ENCODE measurements at regions of chr11 and their contacts with region 1.

Region 1: GRCh38 chr11:8566613-8567210 is 27.3 kb downstream of the STK33 start:
- DNase-seq: peak; percentile 84
- ATAC-seq: peak; percentile 85
- H3K4me3 ChIP-seq: no peak overlapping the region
- H3K27ac ChIP-seq: no peak overlapping the region
- H3K4me1 ChIP-seq: no peaks in the 10 kb centered on the region
- H3K27me3 ChIP-seq: peaks cover 44% of the 10 kb centered on the region
- CTCF ChIP-seq: peak; percentile 69

Region 2: GRCh38 chr11:8192016-8192895 is 374.5 kb before region 1 on chr11:
- CTCF ChIA-PET with region 1: interaction called, 5 read pairs
- POLR2A ChIA-PET with region 1: no interaction called
- intact Hi-C with region 1: loop called (anchors 1 kb)
- DNase-seq: peak; percentile 69
- ATAC-seq: peak; percentile 94
- H3K4me3 ChIP-seq: no peak overlapping the region
- H3K27ac ChIP-seq: no peak overlapping the region
- H3K4me1 ChIP-seq: peaks cover 5% of the 10 kb centered on the region
- H3K27me3 ChIP-seq: no peaks in the 10 kb centered on the region
- CTCF ChIP-seq: peak; percentile 74

Region 3: DNA sequence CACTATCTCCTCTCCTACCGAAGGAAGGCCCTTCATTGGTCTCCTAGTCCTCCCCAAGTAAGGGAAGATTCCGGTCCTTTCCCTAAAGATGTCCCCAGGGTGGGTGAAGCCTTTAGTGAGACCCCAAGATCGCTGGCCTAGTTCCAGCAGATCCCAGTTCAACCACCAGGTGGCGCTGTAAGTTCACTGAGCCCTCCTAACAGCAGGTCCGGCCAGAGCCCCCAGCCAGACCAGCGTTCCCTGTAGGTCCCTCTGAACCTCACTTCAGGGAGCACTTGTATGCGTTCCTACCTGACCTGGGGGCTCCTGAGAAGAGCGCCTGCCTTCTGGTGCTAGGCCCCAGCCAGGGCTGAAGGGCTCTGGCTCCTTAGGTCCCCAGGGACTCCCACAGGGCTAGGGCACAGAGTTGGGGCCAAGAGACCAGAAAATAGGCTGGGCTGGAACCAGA is 341.1 kb before region 1 on chr11:
- CTCF ChIA-PET with region 1: interaction called, 5 read pairs
- POLR2A ChIA-PET with region 1: interaction called, 3 read pairs
- intact Hi-C with region 1: loop called (anchors 1 kb)
- DNase-seq: peak; percentile 70
- ATAC-seq: peak; percentile 57
- H3K4me3 ChIP-seq: no peak overlapping the region
- H3K27ac ChIP-seq: no peak overlapping the region
- H3K4me1 ChIP-seq: peaks cover 32% of the 10 kb centered on the region
- H3K27me3 ChIP-seq: peaks cover 8% of the 10 kb centered on the region; the same call in 1 of the 2 replicates
- CTCF ChIP-seq: peak; percentile 93

Region 4: DNA sequence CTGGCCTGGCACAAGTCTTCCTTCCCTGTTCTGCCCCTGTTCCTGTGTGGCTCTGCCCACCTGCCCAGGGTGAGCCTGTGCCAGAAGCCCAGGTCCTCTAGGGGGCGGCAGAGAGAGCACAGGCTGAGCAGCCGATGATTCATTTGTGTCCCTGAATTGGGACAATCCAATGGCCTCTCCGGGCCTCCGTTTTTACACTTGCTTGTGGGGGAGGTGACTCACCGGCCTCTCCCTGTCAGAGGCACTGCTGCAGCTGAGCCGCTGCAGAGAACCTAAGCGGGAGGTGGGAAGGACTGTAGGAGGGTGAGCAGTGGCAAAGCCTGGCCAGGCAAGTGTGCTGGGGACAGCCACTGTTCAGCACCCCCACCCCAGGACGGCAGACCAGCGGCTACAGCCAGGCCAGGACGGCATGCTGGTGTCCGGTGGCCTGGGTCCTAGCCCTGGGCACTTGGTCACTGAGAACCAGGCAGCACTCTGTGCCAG is 237.8 kb before region 1 on chr11:
- CTCF ChIA-PET with region 1: interaction called, 3 read pairs
- POLR2A ChIA-PET with region 1: no interaction called
- intact Hi-C with region 1: loop called (anchors 5 kb)
- DNase-seq: peak; percentile 97
- ATAC-seq: peak; percentile 98
- H3K4me3 ChIP-seq: peak overlapping the region; percentile 41; the same call in 1 of the 2 replicates
- H3K27ac ChIP-seq: no peak overlapping the region
- H3K4me1 ChIP-seq: peaks cover 11% of the 10 kb centered on the region
- H3K27me3 ChIP-seq: peaks cover 7% of the 10 kb centered on the region; the same call in 1 of the 2 replicates
- CTCF ChIP-seq: peak; percentile 86

Measured in PC-3 (cell line).